ENCODE measurements at regions of chr20 and their contacts with region 1.

Region 1: DNA sequence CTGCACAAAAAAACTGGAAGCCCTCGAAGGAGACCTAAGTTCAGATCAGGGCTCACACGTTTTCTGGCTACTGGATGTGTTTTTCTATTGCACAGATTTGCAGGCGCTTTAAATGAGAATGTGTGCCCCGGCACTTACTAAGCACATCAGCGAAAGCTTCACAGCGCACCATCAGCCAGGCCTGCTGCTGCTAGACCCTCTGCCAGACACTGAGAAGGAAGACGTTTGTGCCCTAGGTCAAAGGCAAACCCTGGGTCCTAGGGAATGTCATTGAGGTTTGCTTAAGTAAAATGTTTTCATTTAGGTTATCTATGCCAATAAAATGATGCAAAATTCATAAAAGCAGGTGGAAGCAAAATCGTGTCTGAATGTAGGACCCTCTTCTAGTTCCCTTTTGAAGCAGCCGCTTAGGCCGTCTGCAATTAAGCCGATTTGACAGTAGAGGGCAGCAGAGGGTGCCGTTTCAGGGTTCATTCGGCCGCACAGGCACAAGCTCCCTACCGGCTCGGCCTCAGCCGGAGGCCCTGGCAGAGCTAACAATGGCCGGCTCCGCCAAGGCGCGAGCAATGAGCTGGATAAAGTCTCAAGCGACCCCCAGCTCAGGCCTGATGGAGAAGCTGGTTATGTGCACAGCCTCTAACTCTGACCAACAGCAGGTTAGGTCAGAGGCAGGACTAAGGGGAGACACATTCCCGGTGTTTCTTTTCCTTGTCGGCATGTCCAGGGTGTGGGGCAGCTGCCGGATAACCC is 107.2 kb upstream of the FOXA2 start:
- DNase-seq: peak; percentile 64

Region 2: GRCh38 chr20:22333885-22334545 is 357.5 kb before region 1 on chr20:
- in situ Hi-C with region 1: loop called (anchors 25 kb)
- DNase-seq: peak; percentile 55

Region 3: GRCh38 chr20:22490287-22491193 is 201.0 kb before region 1 on chr20:
- in situ Hi-C with region 1: no loop called
- DNase-seq: peak; percentile 42

Measured in ACHN (cell line).